ENCODE measurements at regions of chr6 and their contacts with region 1.

Region 1: DNA sequence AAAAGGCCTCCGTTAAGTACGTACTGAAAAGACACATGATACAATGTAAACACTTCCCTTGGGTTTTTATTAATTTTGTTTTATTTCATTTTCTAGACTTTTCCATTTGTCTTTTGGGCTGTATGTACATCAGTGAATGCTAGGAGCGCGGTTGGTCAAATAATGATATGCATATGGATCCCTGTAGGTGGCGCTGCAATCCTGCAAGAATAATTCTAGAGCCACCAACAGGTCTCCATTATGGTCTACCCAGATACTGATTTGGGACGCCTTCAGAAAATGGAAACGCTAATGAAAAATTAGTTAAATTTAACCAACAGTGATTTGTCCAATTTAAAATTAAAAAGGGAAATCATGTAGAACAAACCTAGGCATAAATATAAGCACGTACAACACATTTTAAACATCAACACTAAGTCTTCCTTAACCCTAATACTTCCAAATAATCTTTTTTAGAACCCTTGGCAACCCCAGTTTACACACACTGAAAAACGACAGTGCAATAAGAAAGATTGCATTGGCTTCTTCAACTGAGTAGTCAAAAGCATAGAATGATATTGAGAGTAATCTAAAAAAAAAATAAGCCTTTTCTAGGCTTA is 433.5 kb downstream of the RFPL4B start:
- DNase-seq: peak; percentile 79
- ATAC-seq: peak; percentile 85
- H3K4me3 ChIP-seq: no peak overlapping the region
- H3K27ac ChIP-seq: no peak overlapping the region
- H3K4me1 ChIP-seq: no peaks in the 10 kb centered on the region
- H3K27me3 ChIP-seq: no peaks in the 10 kb centered on the region
- CTCF ChIP-seq: peak; percentile 79

Region 2: DNA sequence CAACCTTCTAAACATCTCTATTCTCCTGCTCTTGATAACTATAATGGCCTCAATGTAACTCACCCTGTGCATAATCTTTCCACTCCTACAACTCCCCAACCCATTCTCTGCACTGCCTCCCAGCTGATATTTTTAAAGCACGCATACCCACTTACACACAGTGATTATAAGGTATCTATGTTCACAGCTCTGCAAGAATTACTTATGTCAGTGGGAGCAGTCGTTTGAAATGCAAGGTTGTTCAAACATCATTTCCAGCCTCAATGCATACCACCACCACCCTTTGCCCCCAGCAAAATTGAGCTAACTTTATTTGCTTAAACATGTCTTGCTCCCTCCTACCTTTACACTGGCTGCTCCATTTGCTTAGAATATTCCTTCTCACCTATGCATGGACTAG is 72.6 kb after region 1 on chr6:
- CTCF ChIA-PET with region 1: no interaction called
- POLR2A ChIA-PET with region 1: no interaction called
- intact Hi-C with region 1: no loop called
- DNase-seq: no peak
- ATAC-seq: no peak
- H3K4me3 ChIP-seq: no peak overlapping the region
- H3K27ac ChIP-seq: no peak overlapping the region
- H3K4me1 ChIP-seq: no peaks in the 10 kb centered on the region
- H3K27me3 ChIP-seq: no peaks in the 10 kb centered on the region
- CTCF ChIP-seq: no peak

Region 3: GRCh38 chr6:113047148-113047547 is 266.6 kb after region 1 on chr6:
- CTCF ChIA-PET with region 1: no interaction called
- POLR2A ChIA-PET with region 1: no interaction called
- intact Hi-C with region 1: loop called (anchors 10 kb)
- DNase-seq: peak; percentile 79
- ATAC-seq: peak; percentile 90
- H3K4me3 ChIP-seq: no peak overlapping the region
- H3K27ac ChIP-seq: peak overlapping the region; percentile 83
- H3K4me1 ChIP-seq: peaks cover 44% of the 10 kb centered on the region
- H3K27me3 ChIP-seq: no peaks in the 10 kb centered on the region
- CTCF ChIP-seq: no peak

Region 4: DNA sequence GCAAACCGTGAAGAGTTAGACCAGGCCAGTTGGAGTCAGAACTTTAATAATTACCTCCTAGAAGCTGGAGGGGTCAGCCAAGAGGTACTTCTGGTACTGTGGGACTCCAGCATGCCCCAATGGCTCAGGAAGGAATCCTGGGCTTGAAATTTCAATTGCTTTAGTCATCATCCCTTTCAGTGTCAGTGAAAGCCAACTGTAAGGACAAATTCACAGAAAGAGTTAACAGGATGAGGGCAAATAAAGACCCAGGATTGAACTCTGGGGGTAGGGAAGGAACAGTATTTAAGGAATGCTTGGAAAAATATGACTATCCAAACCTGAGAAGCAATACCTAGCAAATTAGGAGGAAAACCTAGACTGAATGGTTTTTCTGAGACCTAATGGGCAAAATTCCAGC is 341.5 kb after region 1 on chr6:
- CTCF ChIA-PET with region 1: no interaction called
- POLR2A ChIA-PET with region 1: no interaction called
- intact Hi-C with region 1: loop called (anchors 5 kb)
- DNase-seq: peak; percentile 88
- ATAC-seq: peak; percentile 61
- H3K4me3 ChIP-seq: peak overlapping the region; percentile 2; the same call in 1 of the 2 replicates
- H3K27ac ChIP-seq: peak overlapping the region; percentile 66
- H3K4me1 ChIP-seq: peaks cover 33% of the 10 kb centered on the region
- H3K27me3 ChIP-seq: no peaks in the 10 kb centered on the region
- CTCF ChIP-seq: peak; percentile 44; the same call in 1 of the 2 replicates

Region 5: DNA sequence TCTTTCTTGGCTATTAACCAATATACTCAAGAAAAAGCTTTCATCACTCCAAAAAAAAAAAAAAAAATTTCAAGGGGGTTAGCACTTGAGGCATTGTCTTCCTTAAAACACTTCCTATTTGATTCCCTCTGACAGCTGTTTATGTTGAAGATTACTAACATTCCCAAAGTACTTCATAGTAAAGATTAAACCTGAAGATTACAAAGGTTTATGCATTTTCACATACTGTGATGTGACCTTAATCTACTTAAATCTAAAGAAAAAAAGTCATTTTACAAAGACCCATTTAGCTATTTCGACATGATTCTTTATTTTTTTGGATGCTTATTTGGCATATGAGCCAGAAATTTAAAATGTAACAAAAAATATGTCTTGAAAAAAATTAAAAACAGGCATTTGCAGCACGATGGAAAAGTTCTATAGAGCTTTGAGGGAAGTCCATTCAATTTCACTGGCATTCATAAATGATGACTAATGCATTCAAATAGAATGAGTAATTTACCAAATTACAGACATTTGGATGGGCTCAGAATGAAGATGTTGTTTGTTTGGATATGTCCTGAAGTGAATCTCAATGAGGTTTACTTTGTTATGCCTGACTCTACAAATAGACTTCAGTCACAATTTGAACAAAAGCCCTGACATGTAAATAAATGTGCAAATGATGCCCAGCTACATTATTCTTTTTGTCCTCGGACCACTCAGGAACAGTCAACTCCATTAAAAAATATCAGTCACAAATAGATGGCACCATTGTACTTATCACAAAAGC is 402.0 kb after region 1 on chr6:
- CTCF ChIA-PET with region 1: no interaction called
- POLR2A ChIA-PET with region 1: no interaction called
- intact Hi-C with region 1: loop called (anchors 10 kb)
- DNase-seq: peak; percentile 85
- ATAC-seq: peak; percentile 87
- H3K4me3 ChIP-seq: peak overlapping the region; percentile 20; the same call in 1 of the 2 replicates
- H3K27ac ChIP-seq: peak overlapping the region; percentile 39; the same call in 1 of the 2 replicates
- H3K4me1 ChIP-seq: peaks cover 21% of the 10 kb centered on the region
- H3K27me3 ChIP-seq: no peaks in the 10 kb centered on the region
- CTCF ChIP-seq: no peak; the same call in 1 of the 2 replicates

Region 6: DNA sequence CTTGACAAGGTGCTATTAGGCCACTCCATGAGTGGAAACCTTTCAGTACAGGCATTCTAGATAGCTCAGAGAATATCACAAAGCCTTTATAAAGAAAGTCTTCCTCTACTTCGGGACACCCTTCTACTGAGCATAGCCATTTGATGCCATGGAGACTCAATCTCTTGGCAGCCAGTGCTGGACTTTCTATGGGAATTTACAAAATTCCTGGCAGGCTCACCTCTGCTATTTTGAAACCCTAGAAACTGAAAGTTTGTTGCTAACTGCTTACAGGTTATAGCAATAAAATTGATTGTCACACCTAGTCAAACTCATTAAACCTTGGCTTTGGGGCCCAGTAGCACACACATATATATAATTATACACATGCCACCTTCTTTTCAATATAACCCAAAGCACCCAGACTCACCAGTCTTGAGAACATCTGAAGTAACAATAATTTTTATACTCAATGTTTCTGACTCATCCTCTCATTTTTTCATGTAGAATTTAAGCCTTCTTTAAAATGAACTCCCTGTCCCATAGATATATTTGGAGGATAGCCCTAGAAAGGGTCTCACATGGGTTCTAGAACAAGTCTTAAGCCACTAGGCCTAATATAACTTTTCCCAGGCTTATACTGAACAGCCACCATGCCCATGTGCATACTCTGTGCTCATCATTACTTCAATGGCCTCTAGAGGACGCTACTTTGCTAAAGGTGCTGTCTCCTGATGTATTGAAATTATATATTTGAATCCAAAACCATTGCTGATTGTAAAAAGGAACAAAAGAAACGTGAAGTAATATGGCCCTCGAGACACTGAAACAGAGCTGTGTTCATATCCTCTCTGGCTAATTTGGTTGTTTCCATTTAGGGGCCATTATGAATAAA is 708.5 kb after region 1 on chr6:
- CTCF ChIA-PET with region 1: no interaction called
- POLR2A ChIA-PET with region 1: no interaction called
- intact Hi-C with region 1: loop called (anchors 10 kb)
- DNase-seq: no peak
- ATAC-seq: no peak
- H3K4me3 ChIP-seq: no peak overlapping the region
- H3K27ac ChIP-seq: no peak overlapping the region
- H3K4me1 ChIP-seq: 0 out of 2 replicates have a peak, but pooled peaks cover 5% of the 10 kb centered on the region
- H3K27me3 ChIP-seq: no peaks in the 10 kb centered on the region
- CTCF ChIP-seq: peak; percentile 33; the same call in 1 of the 2 replicates

Region 7: DNA sequence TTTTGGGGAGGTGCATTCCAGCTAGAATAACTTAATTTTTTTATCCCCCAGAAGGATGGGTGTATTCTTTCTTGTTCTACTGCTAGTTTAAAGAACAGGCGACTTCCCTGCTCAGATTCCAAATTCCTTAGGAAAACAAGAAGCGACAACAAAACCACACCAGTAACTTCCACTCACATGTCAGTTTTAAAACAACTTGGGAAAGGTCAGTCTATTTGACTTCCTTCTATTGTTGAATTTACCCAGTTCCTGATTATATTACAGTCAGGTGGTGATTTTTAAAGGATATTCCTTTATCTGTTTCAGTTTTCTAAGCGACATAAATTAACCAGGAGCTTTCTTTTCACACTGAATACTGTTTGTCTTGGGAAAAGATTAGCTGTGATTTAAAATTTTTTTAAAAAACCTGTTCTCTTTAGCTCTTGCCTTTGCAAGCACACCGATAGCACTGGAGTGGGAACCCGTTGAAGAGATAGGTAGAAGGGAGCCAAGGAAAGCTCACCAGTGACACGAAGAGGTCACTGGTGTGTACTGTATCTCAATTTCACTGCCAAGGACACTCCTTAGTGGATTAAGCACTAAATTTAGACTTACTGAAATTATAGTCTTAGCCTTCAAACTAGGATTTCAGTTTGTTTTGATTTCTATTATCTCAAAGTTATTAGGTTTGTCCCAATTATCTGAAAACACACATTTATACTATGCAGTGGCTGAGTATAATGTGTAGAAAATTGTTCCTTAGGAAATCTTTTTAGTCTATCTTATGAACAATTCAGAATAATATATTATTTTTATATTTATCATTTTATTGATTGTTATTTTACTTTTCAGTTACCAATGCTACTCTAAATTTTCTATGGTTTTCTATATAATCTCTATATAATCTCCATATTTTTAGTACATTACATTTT is 1098.8 kb after region 1 on chr6:
- CTCF ChIA-PET with region 1: interaction called, 3 read pairs
- POLR2A ChIA-PET with region 1: no interaction called
- intact Hi-C with region 1: loop called (anchors 1 kb)
- DNase-seq: peak; percentile 76
- ATAC-seq: peak; percentile 95
- H3K4me3 ChIP-seq: no peak overlapping the region
- H3K27ac ChIP-seq: no peak overlapping the region
- H3K4me1 ChIP-seq: peaks cover 8% of the 10 kb centered on the region; the same call in 1 of the 2 replicates
- H3K27me3 ChIP-seq: no peaks in the 10 kb centered on the region
- CTCF ChIP-seq: peak; percentile 76

Region 8: GRCh38 chr6:113909234-113909856 is 1128.7 kb after region 1 on chr6:
- CTCF ChIA-PET with region 1: no interaction called
- POLR2A ChIA-PET with region 1: no interaction called
- intact Hi-C with region 1: loop called (anchors 1 kb)
- DNase-seq: peak; percentile 75
- ATAC-seq: 0 out of 2 replicates have a peak, but pooled peaks have one; percentile 22
- H3K4me3 ChIP-seq: no peak overlapping the region
- H3K27ac ChIP-seq: no peak overlapping the region
- H3K4me1 ChIP-seq: no peaks in the 10 kb centered on the region
- H3K27me3 ChIP-seq: no peaks in the 10 kb centered on the region
- CTCF ChIP-seq: peak; percentile 76